Endothelial cell of umbilical vein (primary cell): ENCODE measurements at regions of chr17 and their contacts with region 1.

Region 1: GRCh38 chr17:29640413-29640812 is 17.7 kb upstream of the CORO6 start:
- DNase-seq: peak; percentile 90
- H3K4me3 ChIP-seq: no peak overlapping the region
- H3K27ac ChIP-seq: peak overlapping the region; percentile 79
- H3K4me1 ChIP-seq: peaks cover 58% of the 10 kb centered on the region
- H3K27me3 ChIP-seq: no peaks in the 10 kb centered on the region
- CTCF ChIP-seq: no peak
- POLR2A ChIP-seq: no peak

Region 2: DNA sequence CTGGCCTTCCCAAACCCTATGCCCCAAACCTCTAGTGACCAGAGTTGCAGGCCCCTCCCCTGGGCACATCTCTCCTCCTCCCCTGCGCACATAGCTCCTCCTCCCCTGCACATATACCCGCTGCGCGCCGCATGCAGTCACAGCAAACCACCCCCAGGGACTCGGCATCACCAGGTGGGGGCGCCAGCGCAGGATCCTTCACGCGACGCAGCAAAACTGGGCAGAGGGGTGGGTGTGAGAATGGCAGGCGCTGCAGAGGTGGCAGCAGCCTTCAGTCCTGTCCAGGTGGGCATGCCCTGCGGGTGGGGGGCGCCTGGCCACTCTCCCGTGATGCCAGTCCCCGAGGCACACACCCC is 23.3 kb before region 1 on chr17:
- CTCF ChIA-PET with region 1: interaction called, 92 read pairs
- POLR2A ChIA-PET with region 1: no interaction called
- dilution Hi-C with region 1: no loop called
- intact Hi-C with region 1: loop called (anchors 1 kb)
- DNase-seq: peak; percentile 86
- H3K4me3 ChIP-seq: peak overlapping the region in 1 of 3 experiments; percentile 2
- H3K27ac ChIP-seq: no peak overlapping the region
- H3K4me1 ChIP-seq: peaks cover 33% of the 10 kb centered on the region
- H3K27me3 ChIP-seq: no peaks in the 10 kb centered on the region
- CTCF ChIP-seq: peak; percentile 91 to 94
- POLR2A ChIP-seq: no peak

Region 3: DNA sequence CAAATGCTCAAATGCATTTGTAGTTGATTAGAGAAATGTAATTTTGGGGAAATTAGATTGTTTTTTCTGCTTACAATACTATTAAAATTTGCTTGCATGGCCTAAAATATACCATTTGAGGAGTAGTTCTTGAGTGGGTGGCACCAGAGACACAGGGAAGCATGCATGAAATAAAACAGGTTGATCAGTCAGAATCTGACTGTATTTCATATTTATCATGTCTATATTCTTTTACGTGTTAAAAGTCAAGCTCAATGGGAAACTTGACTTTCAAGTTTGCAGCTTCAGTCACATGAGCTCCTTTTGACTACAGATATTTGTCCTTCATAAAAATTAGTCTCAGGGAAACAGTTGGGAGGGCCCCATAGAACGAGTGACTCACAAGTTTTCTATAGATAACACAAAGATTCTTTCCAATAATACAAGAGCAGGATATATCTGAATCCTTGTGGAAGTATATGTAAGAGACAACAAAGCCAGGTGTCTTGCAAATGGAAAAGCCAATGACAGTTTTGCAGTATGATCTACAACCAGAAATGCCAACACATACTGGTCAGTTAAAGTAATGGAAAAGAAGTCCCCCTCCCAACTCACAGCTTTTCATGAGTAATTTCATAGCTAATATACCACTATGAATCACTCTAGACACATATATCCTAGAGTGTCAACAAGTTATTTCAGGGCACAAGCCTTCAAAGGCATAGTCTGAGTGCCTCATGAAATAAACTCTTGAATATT is 24.5 kb after region 1 on chr17:
- CTCF ChIA-PET with region 1: interaction called, 11 read pairs
- POLR2A ChIA-PET with region 1: no interaction called
- dilution Hi-C with region 1: no loop called
- intact Hi-C with region 1: loop called (anchors 2 kb)
- DNase-seq: peak; percentile 93
- H3K4me3 ChIP-seq: no peak overlapping the region
- H3K27ac ChIP-seq: peak overlapping the region; percentile 93
- H3K4me1 ChIP-seq: peaks cover 27% of the 10 kb centered on the region
- H3K27me3 ChIP-seq: no peaks in the 10 kb centered on the region
- CTCF ChIP-seq: no peak
- POLR2A ChIP-seq: no peak

Region 4: GRCh38 chr17:29740017-29740416 is 99.6 kb after region 1 on chr17:
- CTCF ChIA-PET with region 1: interaction called, 8 read pairs
- POLR2A ChIA-PET with region 1: no interaction called
- dilution Hi-C with region 1: no loop called
- intact Hi-C with region 1: loop called (anchors 1 kb)
- DNase-seq: peak; percentile 12
- H3K4me3 ChIP-seq: no peak overlapping the region
- H3K27ac ChIP-seq: no peak overlapping the region
- H3K4me1 ChIP-seq: peaks cover 42% of the 10 kb centered on the region
- H3K27me3 ChIP-seq: no peaks in the 10 kb centered on the region
- CTCF ChIP-seq: no peak
- POLR2A ChIP-seq: no peak

Region 5: DNA sequence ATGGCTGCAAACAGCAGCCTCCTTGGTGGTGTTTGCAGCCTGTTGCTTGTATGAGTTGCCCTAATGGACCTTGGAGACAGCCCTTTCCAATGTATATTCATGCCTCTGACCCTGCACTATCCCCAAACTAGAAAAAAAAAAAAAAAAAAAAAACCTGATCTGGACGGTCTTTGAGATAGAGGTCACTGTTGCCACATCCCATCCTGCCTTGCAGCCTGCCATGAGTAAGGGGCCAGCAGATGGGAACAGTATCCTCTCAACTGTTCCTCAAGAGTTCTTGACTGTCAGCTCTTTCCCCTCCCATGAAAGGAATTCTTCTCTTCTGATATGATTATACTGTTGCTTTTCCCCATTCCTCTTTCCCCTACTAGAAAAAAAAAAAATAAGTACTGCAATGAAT is 137.2 kb after region 1 on chr17:
- CTCF ChIA-PET with region 1: interaction called, 275 read pairs
- POLR2A ChIA-PET with region 1: interaction called, 6 read pairs
- dilution Hi-C with region 1: no loop called
- intact Hi-C with region 1: loop called (anchors 1 kb)
- DNase-seq: no peak
- H3K4me3 ChIP-seq: no peak overlapping the region
- H3K27ac ChIP-seq: no peak overlapping the region
- H3K4me1 ChIP-seq: peaks cover 6% of the 10 kb centered on the region
- H3K27me3 ChIP-seq: no peaks in the 10 kb centered on the region
- CTCF ChIP-seq: no peak
- POLR2A ChIP-seq: no peak

Region 6: GRCh38 chr17:29807520-29808351 is 167.3 kb after region 1 on chr17:
- CTCF ChIA-PET with region 1: interaction called, 40 read pairs
- POLR2A ChIA-PET with region 1: no interaction called
- dilution Hi-C with region 1: no loop called
- intact Hi-C with region 1: no loop called
- DNase-seq: peak; percentile 67
- H3K4me3 ChIP-seq: no peak overlapping the region
- H3K27ac ChIP-seq: no peak overlapping the region
- H3K4me1 ChIP-seq: no peaks in the 10 kb centered on the region
- H3K27me3 ChIP-seq: no peaks in the 10 kb centered on the region
- CTCF ChIP-seq: peak; percentile 61 to 64
- POLR2A ChIP-seq: no peak

Region 7: GRCh38 chr17:30021708-30022317 is 381.4 kb after region 1 on chr17:
- CTCF ChIA-PET with region 1: interaction called, 27 read pairs
- POLR2A ChIA-PET with region 1: no interaction called
- dilution Hi-C with region 1: no loop called
- intact Hi-C with region 1: loop called (anchors 1 kb)
- DNase-seq: peak; percentile 71
- H3K4me3 ChIP-seq: no peak overlapping the region
- H3K27ac ChIP-seq: no peak overlapping the region
- H3K4me1 ChIP-seq: peaks cover 2% of the 10 kb centered on the region
- H3K27me3 ChIP-seq: no peaks in the 10 kb centered on the region
- CTCF ChIP-seq: peak; percentile 58 to 59
- POLR2A ChIP-seq: no peak